ENCODE measurements at regions of chr11 and their contacts with region 1.

Region 1: DNA sequence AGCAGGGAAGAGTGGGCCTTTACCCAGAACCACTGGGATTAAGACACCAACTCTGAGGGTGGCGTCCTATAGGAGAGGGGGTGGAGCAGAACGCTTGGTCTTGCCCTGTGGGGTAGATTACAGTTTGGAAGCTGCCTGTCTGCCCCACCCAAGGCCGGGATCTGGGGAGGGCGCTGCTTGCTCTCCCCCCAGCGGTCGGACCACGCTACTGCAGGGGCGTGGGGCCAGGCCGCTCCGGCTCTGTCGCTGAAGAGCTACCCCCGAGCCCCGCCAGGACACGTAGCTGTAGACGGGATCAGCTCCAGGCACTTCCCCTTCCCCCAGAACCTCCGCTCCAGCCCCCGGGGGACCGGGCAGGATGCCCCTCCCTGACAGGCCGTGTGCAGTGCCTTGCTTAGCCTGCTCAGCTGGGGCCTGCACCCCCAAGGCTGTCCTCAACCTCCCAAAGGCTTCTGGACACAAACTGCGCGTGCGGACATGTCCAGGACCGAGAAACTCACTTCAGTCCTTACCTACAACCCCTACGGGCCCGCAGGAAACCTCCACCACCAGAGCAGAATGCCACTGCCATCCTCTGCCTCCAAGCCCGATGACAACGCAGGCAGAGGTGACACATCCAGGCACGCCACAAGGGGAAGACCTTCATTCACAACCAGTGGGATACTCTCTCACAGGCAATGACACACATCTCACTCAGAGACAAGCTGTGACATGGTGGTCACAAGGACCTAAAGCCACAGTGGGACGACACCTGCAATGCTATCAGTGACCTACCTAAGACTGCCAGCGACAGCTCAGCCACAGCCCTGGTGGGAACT is 3.6 kb downstream of the AHNAK start:
- DNase-seq: peak; percentile 92
- ATAC-seq: peak; percentile 38

Region 2: DNA sequence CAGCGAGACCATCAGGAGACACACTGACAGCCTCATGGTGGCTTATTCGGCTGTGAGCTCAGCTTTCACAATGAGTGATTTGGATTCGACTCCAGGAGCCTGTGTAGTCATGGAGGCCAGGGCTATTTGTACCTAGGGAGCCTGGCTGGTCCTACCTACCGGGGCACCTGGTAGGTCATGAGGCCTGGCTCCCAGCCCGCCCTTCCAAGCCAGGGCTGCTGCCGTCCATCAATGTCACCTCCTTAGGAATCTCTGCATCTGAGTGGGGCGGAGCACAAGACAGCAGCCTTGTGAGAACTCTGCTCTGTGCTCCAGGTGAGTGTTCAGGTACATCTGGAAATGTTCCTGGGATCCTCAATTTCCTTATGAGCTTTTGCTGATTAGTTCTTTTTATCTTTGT is 244.0 kb before region 1 on chr11 and contains the start of gene SCGB1D4:
- intact Hi-C with region 1: no loop called
- DNase-seq: no peak
- ATAC-seq: no peak
- total RNA-seq, gene SCGB1D4: not detected

Region 3: GRCh38 chr11:62427630-62428233 is 115.2 kb before region 1 on chr11:
- intact Hi-C with region 1: loop called (anchors 2 kb)
- DNase-seq: no peak
- ATAC-seq: no peak

Region 4: GRCh38 chr11:62560566-62561103 is 17.7 kb after region 1 on chr11:
- intact Hi-C with region 1: loop called (anchors 2 kb)
- DNase-seq: peak; percentile 77
- ATAC-seq: peak; percentile 83

Region 5: GRCh38 chr11:62665075-62665598 is 122.2 kb after region 1 on chr11 and contains the starts of genes C11orf98 and CSKMT:
- intact Hi-C with region 1: loop called (anchors 5 kb)
- DNase-seq: peak; percentile 98
- ATAC-seq: peak; percentile 98
- total RNA-seq, gene C11orf98: 33.0 TPM
- total RNA-seq, gene CSKMT: 4.9 TPM